ENCODE measurements at regions of chr15 and their contacts with region 1.

Region 1: GRCh38 chr15:64046347-64047153 is at the start of gene DAPK2:
- DNase-seq: peak; percentile 57
- H3K4me3 ChIP-seq: peak within 1 kb of the TSS in 2 of 3 experiments; percentile 5 to 45
- H3K27ac ChIP-seq: no peak within 1 kb of the TSS
- H3K4me1 ChIP-seq: peaks cover 6% of the 10 kb centered on the region
- H3K27me3 ChIP-seq: peaks cover 13 to 19% of the 10 kb centered on the region in 2 experiments
- CTCF ChIP-seq: peak; percentile 79 to 82
- POLR2A ChIP-seq: no peak
- total RNA-seq, gene DAPK2: 6.7 and 7.5 TPM in 2 replicates

Region 2: DNA sequence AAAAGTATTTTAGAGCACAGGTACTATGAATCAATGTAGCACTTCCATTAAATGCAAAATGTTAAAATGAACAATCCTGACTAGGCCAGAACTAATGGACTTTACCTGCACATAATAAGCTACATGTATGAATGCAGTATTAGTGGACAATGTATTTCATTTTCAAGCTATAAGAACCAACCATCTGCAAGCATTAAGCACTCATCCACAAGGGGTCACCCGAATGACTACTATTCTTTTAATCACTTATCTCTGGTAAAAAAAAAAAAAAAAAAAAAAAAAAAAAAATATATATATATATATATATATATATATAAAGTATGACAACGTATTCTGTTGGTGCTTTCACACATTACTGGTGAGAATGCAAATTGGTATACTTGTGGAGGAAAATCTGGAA is 220.0 kb before region 1 on chr15:
- CTCF ChIA-PET with region 1: interaction called, 21 read pairs
- POLR2A ChIA-PET with region 1: no interaction called
- dilution Hi-C with region 1: no loop called
- intact Hi-C with region 1: loop called (anchors 2 kb)
- DNase-seq: peak; percentile 47
- H3K4me3 ChIP-seq: no peak overlapping the region
- H3K27ac ChIP-seq: no peak overlapping the region
- H3K4me1 ChIP-seq: peaks cover 4% of the 10 kb centered on the region
- H3K27me3 ChIP-seq: no peaks in the 10 kb centered on the region
- CTCF ChIP-seq: peak in 1 of 2 donors; percentile 10
- POLR2A ChIP-seq: no peak

Region 3: GRCh38 chr15:63833021-63833696 is 213.4 kb before region 1 on chr15:
- CTCF ChIA-PET with region 1: interaction called, 10 read pairs
- POLR2A ChIA-PET with region 1: no interaction called
- dilution Hi-C with region 1: no loop called
- intact Hi-C with region 1: no loop called
- DNase-seq: no peak
- H3K4me3 ChIP-seq: peak overlapping the region; percentile 61 to 93 (median 90)
- H3K27ac ChIP-seq: peak overlapping the region; percentile 94
- H3K4me1 ChIP-seq: peaks cover 35% of the 10 kb centered on the region
- H3K27me3 ChIP-seq: no peaks in the 10 kb centered on the region
- CTCF ChIP-seq: no peak
- POLR2A ChIP-seq: no peak

Region 4: DNA sequence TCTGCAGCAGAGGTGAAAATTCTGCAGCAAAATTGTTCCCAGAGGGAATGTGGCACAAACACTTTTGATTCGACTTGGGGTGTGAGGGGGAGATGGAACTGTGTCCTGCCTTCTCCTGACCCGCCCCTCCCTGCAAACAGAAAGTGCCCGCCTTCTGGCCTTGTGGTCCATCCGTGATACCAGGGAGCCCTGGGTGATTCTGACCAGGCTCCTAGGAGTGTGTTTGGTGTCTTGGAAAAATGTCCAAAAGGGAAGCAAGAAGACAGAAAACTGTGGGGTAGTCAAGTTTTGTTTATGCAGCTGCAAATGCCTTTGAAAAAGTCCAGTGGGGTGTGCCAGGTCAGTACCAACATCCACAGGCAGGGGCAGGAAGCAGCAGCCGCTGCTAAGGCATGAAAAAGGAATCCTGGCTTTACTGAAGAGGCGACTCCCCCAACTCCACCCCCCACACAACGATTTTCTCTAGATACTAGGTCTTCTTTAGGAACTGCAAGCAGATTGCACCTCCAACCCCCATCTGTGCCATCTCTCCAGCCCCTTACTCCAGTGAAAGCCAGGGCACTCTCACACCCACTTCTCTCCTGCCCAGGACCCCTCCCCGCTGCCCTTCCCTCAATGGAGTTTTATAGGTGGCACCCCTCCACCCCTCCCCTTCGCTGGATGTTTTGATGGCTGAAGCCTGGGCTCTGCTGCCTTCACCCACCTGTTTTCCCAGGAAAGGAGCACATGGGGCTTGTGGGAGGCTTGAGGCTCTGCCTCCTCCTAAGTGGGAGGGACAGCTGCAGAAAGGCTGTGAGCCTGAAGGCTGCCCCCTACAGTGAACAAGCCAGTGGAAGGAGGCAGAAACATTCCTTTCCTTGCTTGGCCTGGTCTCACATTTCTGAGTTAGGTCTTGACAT is 130.4 kb before region 1 on chr15:
- CTCF ChIA-PET with region 1: interaction called, 5 read pairs
- POLR2A ChIA-PET with region 1: no interaction called
- dilution Hi-C with region 1: no loop called
- intact Hi-C with region 1: loop called (anchors 1 kb)
- DNase-seq: peak; percentile 78
- H3K4me3 ChIP-seq: no peak overlapping the region
- H3K27ac ChIP-seq: no peak overlapping the region
- H3K4me1 ChIP-seq: peaks cover 7% of the 10 kb centered on the region
- H3K27me3 ChIP-seq: no peaks in the 10 kb centered on the region
- CTCF ChIP-seq: peak; percentile 37 to 67
- POLR2A ChIP-seq: no peak

Region 5: DNA sequence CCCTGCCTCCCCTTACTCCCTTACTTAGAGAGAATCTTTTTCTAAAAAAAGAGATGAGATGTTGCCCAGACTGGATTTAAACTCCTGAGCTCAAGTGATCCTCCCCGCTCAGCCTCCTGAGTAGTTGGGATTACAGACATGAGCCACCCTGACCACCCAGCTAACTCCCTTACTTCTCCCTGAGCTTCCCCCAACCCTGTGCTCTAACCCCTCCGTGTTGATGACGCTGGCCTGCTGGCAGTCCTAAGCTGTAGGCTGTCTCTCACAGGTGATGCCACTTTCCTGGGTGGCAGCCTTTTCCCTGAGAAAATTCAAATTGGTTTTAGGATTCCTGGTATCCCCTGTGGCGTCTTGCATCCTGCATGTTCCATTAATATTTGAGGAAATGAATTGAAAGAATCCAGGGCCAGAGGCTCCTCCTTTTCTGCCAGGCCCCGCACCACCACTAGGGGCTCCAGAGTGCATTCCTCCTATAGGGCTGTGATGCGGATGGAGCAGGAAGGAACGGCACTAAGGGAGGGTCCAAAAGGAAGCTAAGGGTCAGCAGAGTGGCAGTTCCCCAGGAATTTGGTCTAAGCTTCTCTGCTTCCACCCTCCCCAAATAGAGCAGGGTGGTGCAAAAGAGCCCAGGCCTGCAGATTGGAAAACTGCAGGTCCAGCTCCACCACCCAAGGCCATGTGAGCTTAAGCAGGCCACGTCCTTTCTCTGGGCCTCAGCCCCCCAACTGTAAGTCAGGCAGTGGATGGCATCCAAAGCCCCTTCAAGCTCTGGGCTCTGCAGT is 101.4 kb before region 1 on chr15:
- CTCF ChIA-PET with region 1: interaction called, 38 read pairs
- POLR2A ChIA-PET with region 1: no interaction called
- dilution Hi-C with region 1: no loop called
- intact Hi-C with region 1: loop called (anchors 1 kb)
- DNase-seq: peak; percentile 54
- H3K4me3 ChIP-seq: no peak overlapping the region
- H3K27ac ChIP-seq: no peak overlapping the region
- H3K4me1 ChIP-seq: peaks cover 7% of the 10 kb centered on the region
- H3K27me3 ChIP-seq: no peaks in the 10 kb centered on the region
- CTCF ChIP-seq: peak; percentile 92
- POLR2A ChIP-seq: no peak

Region 6: DNA sequence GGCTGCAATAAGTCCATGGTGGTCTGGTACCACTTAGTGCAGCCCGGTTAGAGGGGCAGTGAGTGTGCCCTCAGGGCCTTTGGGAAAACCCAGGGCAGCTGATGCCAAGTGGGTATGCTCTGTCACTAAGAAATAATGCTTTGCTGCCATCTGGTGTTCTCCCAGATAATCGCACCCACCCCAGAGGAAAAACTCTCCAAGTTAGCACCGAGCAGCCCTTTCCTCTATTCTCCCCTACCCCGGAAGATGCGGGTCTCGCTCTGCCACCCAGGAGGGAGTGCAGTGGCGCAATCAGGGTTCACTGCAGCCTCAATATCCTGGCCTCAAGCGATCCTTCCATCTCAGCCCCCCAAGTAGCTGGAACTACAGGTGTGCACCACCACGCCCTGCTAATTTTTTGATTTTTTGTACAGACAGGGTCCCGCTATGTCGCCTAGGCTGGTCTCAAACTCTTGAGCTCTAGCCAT is 21.0 kb after region 1 on chr15:
- CTCF ChIA-PET with region 1: interaction called, 20 read pairs
- POLR2A ChIA-PET with region 1: no interaction called
- dilution Hi-C with region 1: no loop called
- intact Hi-C with region 1: no loop called
- DNase-seq: peak; percentile 64
- H3K4me3 ChIP-seq: no peak overlapping the region
- H3K27ac ChIP-seq: no peak overlapping the region
- H3K4me1 ChIP-seq: peaks cover 17% of the 10 kb centered on the region
- H3K27me3 ChIP-seq: no peaks in the 10 kb centered on the region
- CTCF ChIP-seq: peak; percentile 63 to 81
- POLR2A ChIP-seq: no peak

Region 7: GRCh38 chr15:64288608-64289398 is 242.3 kb after region 1 on chr15:
- CTCF ChIA-PET with region 1: no interaction called
- POLR2A ChIA-PET with region 1: no interaction called
- dilution Hi-C with region 1: no loop called
- intact Hi-C with region 1: no loop called
- DNase-seq: peak; percentile 37
- H3K4me3 ChIP-seq: no peak overlapping the region
- H3K27ac ChIP-seq: no peak overlapping the region
- H3K4me1 ChIP-seq: no peaks in the 10 kb centered on the region
- H3K27me3 ChIP-seq: no peaks in the 10 kb centered on the region
- CTCF ChIP-seq: no peak
- POLR2A ChIP-seq: no peak

Measured in endothelial cell of umbilical vein (primary cell).